GM12878 (cell line): ENCODE measurements at regions of chr14 and their contacts with region 1.

Region 1: GRCh38 chr14:49977126-49977841 is 84.4 kb downstream of the ARF6 start:
- DNase-seq: no peak
- ATAC-seq: peak; percentile 91
- H3K4me3 ChIP-seq: peak overlapping the region; percentile 7; the same call in 1 of the 2 replicates
- H3K27ac ChIP-seq: peak overlapping the region; percentile 77
- H3K4me1 ChIP-seq: peaks cover 33% of the 10 kb centered on the region
- H3K27me3 ChIP-seq: no peaks in the 10 kb centered on the region
- CTCF ChIP-seq: no peak
- EP300 ChIP-seq: no peak
- POLR2A ChIP-seq: peak; percentile 58
- RAD21 ChIP-seq: 0 out of 2 replicates have a peak, but pooled peaks have one; percentile 7

Region 2: DNA sequence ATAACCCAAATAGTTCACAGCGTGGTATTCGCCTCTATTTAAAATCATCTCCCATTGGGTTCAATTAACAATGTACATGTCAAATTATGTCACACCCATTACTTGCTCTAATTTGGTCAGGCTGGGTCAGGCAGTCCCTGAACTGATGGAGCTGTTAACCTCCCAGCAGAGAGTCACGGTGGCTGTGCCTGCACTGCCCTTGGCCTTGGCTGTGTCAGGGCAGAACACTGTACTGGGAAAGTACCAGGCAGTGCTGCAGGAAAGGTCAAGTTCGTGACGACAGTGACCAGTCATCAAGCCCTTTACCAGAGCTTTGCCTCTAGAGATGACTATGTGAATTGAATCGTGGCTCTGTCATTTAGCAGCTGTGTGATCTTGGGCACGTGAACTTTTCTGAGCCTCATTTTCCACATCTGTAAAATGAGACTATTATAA is 15.6 kb after region 1 on chr14:
- CTCF ChIA-PET with region 1: interaction called, 15 read pairs
- POLR2A ChIA-PET with region 1: interaction called, 119 read pairs
- RAD21 ChIA-PET with region 1: interaction called, 16 read pairs
- SMC1A ChIA-PET with region 1: interaction called, 133 read pairs
- in situ Hi-C with region 1: no loop called
- intact Hi-C with region 1: no loop called
- DNase-seq: peak; percentile 87
- ATAC-seq: peak; percentile 95
- H3K4me3 ChIP-seq: no peak overlapping the region
- H3K27ac ChIP-seq: peak overlapping the region; percentile 29; the same call in 1 of the 2 replicates
- H3K4me1 ChIP-seq: peaks cover 12% of the 10 kb centered on the region
- H3K27me3 ChIP-seq: no peaks in the 10 kb centered on the region
- CTCF ChIP-seq: no peak
- EP300 ChIP-seq: peak; percentile 91; a peak in 3 of 4 replicates
- POLR2A ChIP-seq: peak; percentile 75
- RAD21 ChIP-seq: no peak